ENCODE measurements at regions of chr20 and their contacts with region 1.

Region 1: GRCh38 chr20:44222633-44223368 is 12.2 kb upstream of the OSER1 start:
- DNase-seq: peak in 1 of 5 donors; percentile 50
- ATAC-seq: peak; percentile 33 to 65 (median 50)
- H3K4me3 ChIP-seq: no peak overlapping the region
- H3K27ac ChIP-seq: peak overlapping the region in 6 of 12 donors; percentile 20 to 74 (median 38)
- H3K4me1 ChIP-seq: peaks cover 0 to 21% (median 13%) of the 10 kb centered on the region in 12 donors
- H3K27me3 ChIP-seq: no peaks in the 10 kb centered on the region
- CTCF ChIP-seq: no peak
- POLR2A ChIP-seq: no peak

Region 2: DNA sequence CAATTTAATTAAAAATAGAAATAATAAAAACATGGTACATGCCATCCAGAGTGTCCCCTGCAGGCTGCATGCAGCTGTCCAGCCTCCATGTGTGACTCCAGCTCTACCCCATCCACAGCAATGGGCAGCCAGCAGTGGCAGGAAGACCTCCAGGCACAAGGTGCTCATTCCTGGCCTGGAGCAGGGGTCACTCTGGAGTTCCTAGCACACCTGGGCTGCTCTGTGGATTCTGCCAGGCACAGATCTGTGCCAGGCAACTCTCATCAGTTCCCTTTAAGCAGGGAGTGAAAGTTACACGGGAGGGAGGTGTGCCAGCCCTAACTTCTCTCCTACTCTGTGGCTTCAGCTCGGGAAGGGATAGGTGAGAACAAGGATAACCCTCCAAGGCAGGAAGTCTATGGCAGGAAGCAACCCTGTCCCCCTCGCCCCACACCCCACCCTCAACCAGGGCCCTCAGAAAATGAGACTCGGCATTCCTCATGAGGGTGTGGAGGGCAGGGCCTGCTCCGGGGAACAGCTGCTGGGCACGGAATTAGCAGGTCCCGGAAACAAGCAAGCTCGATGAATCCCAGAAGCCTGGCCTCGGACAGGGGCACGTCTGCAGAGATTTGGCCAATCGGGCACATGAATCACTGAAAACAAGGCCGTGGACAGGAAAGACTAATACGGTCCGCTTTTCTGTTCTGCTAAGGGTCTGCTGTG is 45.8 kb before region 1 on chr20:
- intact Hi-C with region 1: no loop called
- DNase-seq: peak in 2 of 5 donors; percentile 37 to 55
- ATAC-seq: peak in 2 of 4 donors; percentile 35 to 38
- H3K4me3 ChIP-seq: no peak overlapping the region
- H3K27ac ChIP-seq: peak overlapping the region; percentile 3 to 97 (median 77)
- H3K4me1 ChIP-seq: peaks cover 0 to 84% (median 31%) of the 10 kb centered on the region in 12 donors
- H3K27me3 ChIP-seq: peaks cover 0 to 3% (median 0%) of the 10 kb centered on the region in 9 donors
- CTCF ChIP-seq: no peak
- POLR2A ChIP-seq: no peak

Region 3: GRCh38 chr20:44302026-44302669 is 79.3 kb after region 1 on chr20:
- intact Hi-C with region 1: loop called in 1 of 10 experiments (anchors 5 kb)
- DNase-seq: peak in 2 of 5 donors; percentile 53
- ATAC-seq: peak; percentile 57 to 77 (median 76)
- H3K4me3 ChIP-seq: no peak overlapping the region
- H3K27ac ChIP-seq: peak overlapping the region in 11 of 12 donors; percentile 11 to 95 (median 51)
- H3K4me1 ChIP-seq: peaks cover 0 to 65% (median 21%) of the 10 kb centered on the region in 12 donors
- H3K27me3 ChIP-seq: no peaks in the 10 kb centered on the region
- CTCF ChIP-seq: no peak
- POLR2A ChIP-seq: no peak